A673 (cell line): ENCODE measurements at regions of chr17 and their contacts with region 1.

Region 1: GRCh38 chr17:42577532-42578281 is at the start of gene PSMC3IP:
- DNase-seq: peak; percentile 91
- H3K4me3 ChIP-seq: peak within 1 kb of the TSS; percentile 88
- H3K27ac ChIP-seq: peak within 1 kb of the TSS; percentile 85
- H3K4me1 ChIP-seq: peaks cover 5% of the 10 kb centered on the region
- H3K27me3 ChIP-seq: no peaks in the 10 kb centered on the region
- CTCF ChIP-seq: peak; percentile 48
- total RNA-seq, gene PSMC3IP: 30.9 and 31.9 TPM in 2 replicates

Region 2: GRCh38 chr17:42294469-42295398 is 283.0 kb before region 1 on chr17:
- CTCF ChIA-PET with region 1: no interaction called
- POLR2A ChIA-PET with region 1: no interaction called
- intact Hi-C with region 1: no loop called
- DNase-seq: no peak
- H3K4me3 ChIP-seq: no peak overlapping the region
- H3K27ac ChIP-seq: no peak overlapping the region
- H3K4me1 ChIP-seq: no peaks in the 10 kb centered on the region
- H3K27me3 ChIP-seq: no peaks in the 10 kb centered on the region
- CTCF ChIP-seq: no peak

Region 3: GRCh38 chr17:42502091-42502490 is 75.6 kb before region 1 on chr17:
- CTCF ChIA-PET with region 1: no interaction called
- POLR2A ChIA-PET with region 1: no interaction called
- intact Hi-C with region 1: no loop called
- DNase-seq: no peak
- H3K4me3 ChIP-seq: no peak overlapping the region
- H3K27ac ChIP-seq: no peak overlapping the region
- H3K4me1 ChIP-seq: no peaks in the 10 kb centered on the region
- H3K27me3 ChIP-seq: no peaks in the 10 kb centered on the region
- CTCF ChIP-seq: no peak

Region 4: GRCh38 chr17:42677008-42677857 is 99.5 kb after region 1 on chr17:
- CTCF ChIA-PET with region 1: interaction called, 14 read pairs
- POLR2A ChIA-PET with region 1: no interaction called
- intact Hi-C with region 1: loop called (anchors 5 kb)
- DNase-seq: peak; percentile 96
- H3K4me3 ChIP-seq: peak overlapping the region; percentile 77
- H3K27ac ChIP-seq: peak overlapping the region; percentile 88
- H3K4me1 ChIP-seq: peaks cover 22% of the 10 kb centered on the region
- H3K27me3 ChIP-seq: no peaks in the 10 kb centered on the region
- CTCF ChIP-seq: no peak

Region 5: GRCh38 chr17:42698736-42699414 is 121.2 kb after region 1 on chr17:
- CTCF ChIA-PET with region 1: no interaction called
- POLR2A ChIA-PET with region 1: no interaction called
- intact Hi-C with region 1: no loop called
- DNase-seq: no peak
- H3K4me3 ChIP-seq: no peak overlapping the region
- H3K27ac ChIP-seq: no peak overlapping the region
- H3K4me1 ChIP-seq: no peaks in the 10 kb centered on the region
- H3K27me3 ChIP-seq: no peaks in the 10 kb centered on the region
- CTCF ChIP-seq: no peak

Region 6: DNA sequence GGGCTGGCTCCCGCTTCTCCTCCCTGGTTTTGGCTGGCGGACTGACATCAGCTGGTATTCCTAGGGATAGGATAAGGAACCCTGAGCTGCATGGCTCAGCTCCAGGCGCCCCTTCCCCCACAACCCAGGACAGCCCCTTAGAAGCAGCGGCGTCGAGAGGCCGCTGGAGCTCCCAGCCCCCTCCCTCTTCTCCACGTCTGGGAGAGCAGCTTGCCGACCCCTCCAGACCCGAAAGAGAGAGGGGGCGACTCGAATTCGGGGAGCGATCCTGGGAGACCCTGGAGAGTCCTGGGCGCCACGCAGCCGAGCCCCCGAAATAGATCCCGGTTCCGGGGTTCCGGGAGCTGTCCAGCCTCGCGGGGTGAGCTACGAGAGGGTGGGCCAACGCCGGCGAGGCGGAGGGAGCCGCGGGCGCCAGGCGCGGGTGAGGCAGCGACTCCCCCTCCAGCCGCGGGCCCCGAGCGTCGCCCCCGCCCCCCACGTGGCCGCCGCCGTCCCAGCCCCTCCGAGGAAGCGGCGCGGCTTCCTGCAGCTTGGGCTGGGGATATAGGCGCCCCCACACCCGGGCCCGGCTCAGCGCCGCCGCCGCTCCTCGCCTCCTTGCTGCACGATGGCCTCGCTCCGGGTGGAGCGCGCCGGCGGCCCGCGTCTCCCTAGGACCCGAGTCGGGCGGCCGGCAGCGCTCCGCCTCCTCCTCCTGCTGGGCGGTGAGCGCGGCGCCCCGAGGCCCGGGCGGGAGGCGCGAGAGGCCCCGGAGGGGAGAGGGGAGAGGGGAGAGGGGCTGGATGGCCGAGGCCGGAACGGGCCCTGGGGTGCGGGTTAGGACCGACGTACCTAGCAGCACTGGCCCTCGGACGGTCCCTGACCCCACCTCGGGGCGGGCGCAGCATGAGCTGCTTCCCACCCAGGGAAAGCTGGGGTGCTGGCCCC is 183.2 kb after region 1 on chr17 and contains the start of gene RAMP2:
- CTCF ChIA-PET with region 1: interaction called, 15 read pairs
- POLR2A ChIA-PET with region 1: no interaction called
- intact Hi-C with region 1: loop called (anchors 5 kb)
- DNase-seq: peak; percentile 19
- H3K4me3 ChIP-seq: peak within 1 kb of the TSS; percentile 40
- H3K27ac ChIP-seq: no peak within 1 kb of the TSS
- H3K4me1 ChIP-seq: no peaks in the 10 kb centered on the region
- H3K27me3 ChIP-seq: no peaks in the 10 kb centered on the region
- CTCF ChIP-seq: no peak
- total RNA-seq, gene RAMP2: 3.8 and 5.0 TPM in 2 replicates